ENCODE measurements at regions of chr20 and their contacts with region 1.

Region 1: DNA sequence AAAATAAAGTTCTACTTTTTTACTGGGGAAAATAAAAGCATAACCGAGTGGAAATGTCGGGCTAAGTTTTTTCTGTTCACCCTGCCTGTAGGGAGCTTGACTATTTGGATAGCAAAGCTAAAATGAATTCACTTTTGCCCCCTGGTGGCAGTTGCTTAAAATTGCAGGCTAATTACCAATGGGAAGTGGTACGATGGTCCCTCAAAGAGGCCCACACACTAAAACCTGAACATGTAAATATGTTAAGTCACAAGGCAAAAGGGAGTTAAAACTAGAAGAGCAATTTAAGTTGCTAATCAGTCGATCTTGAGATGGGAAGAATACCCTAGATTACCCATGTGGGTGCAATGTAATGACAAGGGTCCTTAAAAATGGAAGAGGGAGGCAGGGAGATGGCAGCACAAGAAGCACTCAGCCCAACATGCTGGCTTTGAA is 916 bp upstream of the SUN5 start:
- DNase-seq: peak; percentile 44
- ATAC-seq: peak; percentile 77
- H3K4me3 Mint-ChIP-seq: no peak overlapping the region
- H3K27ac Mint-ChIP-seq: no peak overlapping the region
- H3K4me1 Mint-ChIP-seq: peaks cover 9% of the 10 kb centered on the region
- H3K27me3 Mint-ChIP-seq: no peaks in the 10 kb centered on the region
- CTCF ChIP-seq: peak; percentile 83

Region 2: GRCh38 chr20:32920530-32921298 is 84.4 kb before region 1 on chr20:
- CTCF ChIA-PET with region 1: interaction called, 17 read pairs
- POLR2A ChIA-PET with region 1: no interaction called
- intact Hi-C with region 1: no loop called
- DNase-seq: no peak
- ATAC-seq: no peak
- H3K4me3 Mint-ChIP-seq: no peak overlapping the region
- H3K27ac Mint-ChIP-seq: no peak overlapping the region
- H3K4me1 Mint-ChIP-seq: no peaks in the 10 kb centered on the region
- H3K27me3 Mint-ChIP-seq: no peaks in the 10 kb centered on the region
- CTCF ChIP-seq: no peak

Region 3: DNA sequence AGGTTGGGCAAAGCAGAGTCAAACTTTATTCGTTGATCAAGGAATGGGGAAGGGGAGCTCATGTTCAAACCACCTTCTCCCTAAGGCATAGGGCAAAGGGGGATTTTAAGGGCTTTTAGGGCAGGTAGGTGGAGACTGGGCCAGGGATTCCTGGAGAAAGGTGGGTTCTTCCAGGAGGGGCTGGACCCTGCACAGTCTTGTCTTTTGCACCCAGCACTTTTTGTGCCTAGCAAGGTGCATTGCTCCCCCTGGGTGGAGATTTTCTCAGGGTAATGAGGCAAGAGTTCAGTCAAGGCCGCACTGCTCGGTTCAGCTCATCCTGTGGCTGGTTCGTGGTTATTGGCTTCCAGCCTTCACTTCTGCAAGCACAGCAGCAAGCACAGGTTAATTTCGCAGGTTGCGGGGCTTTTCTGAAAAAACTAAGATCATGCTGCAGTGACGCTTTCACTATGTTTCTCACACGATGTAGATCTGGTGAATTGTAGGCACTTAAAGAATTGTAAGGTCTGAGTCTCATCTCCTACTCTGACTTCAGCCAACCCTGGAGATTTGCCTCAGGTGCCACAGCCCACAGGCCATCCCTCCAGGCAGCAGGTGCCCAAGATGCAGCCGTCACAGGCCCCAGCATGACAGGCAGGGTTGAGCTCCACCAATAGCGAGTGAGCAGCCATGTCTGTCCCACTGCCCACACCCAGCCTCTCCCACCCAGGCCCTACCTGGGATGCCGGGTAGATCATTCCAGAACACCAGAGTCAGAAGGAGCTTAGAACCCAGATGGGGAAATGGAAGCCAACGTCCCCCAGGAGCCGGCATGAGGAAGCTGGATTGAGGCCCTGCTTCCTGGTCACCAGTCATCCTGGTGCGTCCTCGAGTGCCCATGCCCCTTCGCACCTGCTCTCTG is 38.0 kb before region 1 on chr20:
- CTCF ChIA-PET with region 1: interaction called, 13 read pairs
- POLR2A ChIA-PET with region 1: interaction called, 6 read pairs
- intact Hi-C with region 1: no loop called
- DNase-seq: peak; percentile 82
- ATAC-seq: peak; percentile 31
- H3K4me3 Mint-ChIP-seq: peak overlapping the region; percentile 28
- H3K27ac Mint-ChIP-seq: peak overlapping the region; percentile 71
- H3K4me1 Mint-ChIP-seq: peaks cover 74% of the 10 kb centered on the region
- H3K27me3 Mint-ChIP-seq: no peaks in the 10 kb centered on the region
- CTCF ChIP-seq: no peak